B cell (primary cell): ENCODE measurements at regions of chr22 and their contacts with region 1.

Region 1: DNA sequence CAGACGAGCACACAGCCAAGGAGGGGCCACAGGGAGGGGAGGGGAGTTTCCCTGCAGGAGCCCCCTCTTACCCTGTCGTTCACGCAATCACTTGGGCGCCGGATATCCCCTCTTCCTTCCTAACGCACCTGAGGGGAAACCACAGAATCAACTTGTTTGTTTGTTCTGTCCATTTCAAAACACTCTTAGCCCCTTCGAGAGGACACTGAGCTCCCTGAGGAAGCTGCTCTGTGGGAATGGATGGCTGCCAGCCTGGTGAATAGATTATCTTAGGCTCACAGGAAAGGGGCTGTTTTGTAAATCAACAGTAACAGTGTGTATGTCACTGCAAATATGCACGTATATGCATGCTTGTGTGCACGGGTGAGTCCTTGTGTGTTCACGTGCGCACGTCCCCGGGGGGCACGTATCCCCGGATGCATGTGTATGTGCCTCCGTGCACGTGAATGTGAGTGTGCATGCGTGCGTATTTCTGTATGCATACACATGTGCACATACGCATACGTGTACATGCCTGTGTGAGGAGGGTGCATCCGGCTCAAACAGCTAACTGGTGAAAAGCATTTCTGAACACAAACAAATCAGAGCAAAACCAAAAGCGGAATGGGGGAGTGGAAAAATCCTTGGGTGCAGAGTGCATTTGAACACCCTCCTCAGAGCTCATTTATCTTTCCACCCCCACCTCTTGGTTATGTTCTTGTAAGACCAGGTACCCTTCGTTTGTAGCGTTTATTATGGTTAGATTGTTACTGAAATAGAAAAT is 7.2 kb downstream of the ARSA start:
- DNase-seq: peak; percentile 94
- ATAC-seq: peak; percentile 81
- H3K4me3 ChIP-seq: peak overlapping the region; percentile 46 to 79 (median 59)
- H3K4me3 Mint-ChIP-seq: peak overlapping the region; percentile 95
- H3K27ac ChIP-seq: peak overlapping the region; percentile 91 to 95
- H3K27ac Mint-ChIP-seq: peak overlapping the region; percentile 97
- H3K4me1 ChIP-seq: peaks cover 24 to 35% of the 10 kb centered on the region in 2 donors
- H3K4me1 Mint-ChIP-seq: peaks cover 31% of the 10 kb centered on the region
- H3K27me3 ChIP-seq: no peaks in the 10 kb centered on the region
- H3K27me3 Mint-ChIP-seq: no peaks in the 10 kb centered on the region
- CTCF ChIP-seq: peak; percentile 24

Region 2: DNA sequence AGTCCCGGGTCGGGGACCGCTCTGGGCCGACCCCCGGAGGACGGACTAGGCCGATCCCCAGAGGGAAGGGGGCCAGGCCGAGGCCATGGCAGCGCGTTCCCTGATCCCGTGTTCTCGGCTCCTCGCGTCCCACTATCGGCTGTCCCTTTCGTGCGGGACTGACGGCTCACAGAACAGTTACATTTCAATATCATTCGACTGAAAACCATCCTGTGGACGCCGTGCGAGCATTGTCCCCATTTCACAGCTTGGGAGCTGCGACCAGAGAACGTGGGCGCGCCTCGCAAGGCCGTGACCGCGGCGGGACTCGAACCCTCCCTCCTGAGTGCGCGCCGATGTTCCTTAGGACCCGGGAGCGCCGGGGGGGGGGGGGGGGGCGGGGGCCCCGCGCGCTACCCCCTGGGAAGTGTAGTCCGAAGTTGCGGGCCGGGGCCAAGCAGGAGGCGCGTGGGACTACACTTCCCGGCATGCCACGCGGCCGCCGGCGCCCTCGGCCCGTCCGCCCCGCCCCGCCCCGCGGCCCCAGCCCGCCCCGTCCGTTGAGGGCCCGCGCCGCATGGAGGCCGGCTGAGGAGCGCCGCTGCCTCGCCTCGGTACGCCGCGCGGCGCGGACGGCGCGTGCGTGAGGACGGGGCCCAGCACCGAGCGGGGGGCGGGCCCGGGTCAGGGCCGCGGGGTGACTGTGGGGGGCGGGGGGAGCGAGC is 435.2 kb before region 1 on chr22 and contains the start of gene TRABD:
- CTCF ChIA-PET with region 1: no interaction called
- POLR2A ChIA-PET with region 1: no interaction called
- intact Hi-C with region 1: loop called (anchors 2 kb)
- DNase-seq: peak; percentile 92
- ATAC-seq: peak; percentile 60
- H3K4me3 ChIP-seq: peak within 1 kb of the TSS; percentile 52 to 76 (median 61)
- H3K4me3 Mint-ChIP-seq: peak within 1 kb of the TSS; percentile 90
- H3K27ac ChIP-seq: peak within 1 kb of the TSS; percentile 38 to 71
- H3K27ac Mint-ChIP-seq: peak within 1 kb of the TSS; percentile 86
- H3K4me1 ChIP-seq: peaks cover 50 to 54% of the 10 kb centered on the region in 2 donors
- H3K4me1 Mint-ChIP-seq: peaks cover 36% of the 10 kb centered on the region
- H3K27me3 ChIP-seq: peaks cover 0 to 17% (median 2%) of the 10 kb centered on the region in 4 experiments
- H3K27me3 Mint-ChIP-seq: no peaks in the 10 kb centered on the region
- CTCF ChIP-seq: no peak
- total RNA-seq, gene TRABD: 200 and 205 TPM in 2 replicates

Region 3: DNA sequence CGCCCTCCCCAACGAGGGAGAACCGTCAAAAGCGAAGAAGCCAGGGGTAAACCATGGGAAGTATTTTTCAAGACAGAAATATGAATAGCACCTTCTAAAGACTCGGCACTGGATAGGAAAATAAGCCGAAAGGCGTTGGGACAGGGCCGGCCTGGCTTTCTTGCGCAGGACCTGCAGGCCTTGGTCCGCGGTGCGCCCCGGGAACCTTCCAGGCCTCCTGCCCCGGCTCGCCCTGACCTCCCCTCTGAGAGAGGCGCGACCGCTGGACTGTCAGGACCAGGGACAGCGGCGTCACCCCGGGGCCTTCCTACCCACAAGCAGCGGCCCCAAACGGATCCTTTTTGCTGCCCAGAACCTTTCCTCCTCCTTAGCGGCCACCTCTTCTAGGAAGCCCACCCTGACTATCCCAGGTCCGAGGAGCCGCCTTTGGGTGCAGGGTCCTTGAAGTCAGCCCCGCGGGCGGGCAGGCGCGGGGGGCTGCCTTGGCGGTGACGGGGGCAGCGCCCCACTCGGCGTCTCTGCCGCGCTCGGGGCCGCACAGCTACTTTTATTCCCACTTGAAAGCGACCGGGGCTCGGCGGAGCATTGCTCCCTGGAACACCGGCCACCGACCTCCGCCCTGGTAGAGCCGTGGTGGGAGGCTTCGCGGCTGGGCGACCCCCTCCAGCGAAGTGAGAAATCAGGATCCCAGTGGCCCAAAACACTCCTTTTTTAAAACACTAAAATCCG is 349.9 kb before region 1 on chr22:
- CTCF ChIA-PET with region 1: interaction called, 16 read pairs
- POLR2A ChIA-PET with region 1: no interaction called
- intact Hi-C with region 1: loop called (anchors 1 kb)
- DNase-seq: peak; percentile 82
- ATAC-seq: peak; percentile 58
- H3K4me3 ChIP-seq: peak overlapping the region in 4 of 5 experiments; percentile 43 to 79 (median 62)
- H3K4me3 Mint-ChIP-seq: peak overlapping the region; percentile 80
- H3K27ac ChIP-seq: no peak overlapping the region
- H3K27ac Mint-ChIP-seq: peak overlapping the region; percentile 10
- H3K4me1 ChIP-seq: peaks cover 23 to 34% of the 10 kb centered on the region in 2 donors
- H3K4me1 Mint-ChIP-seq: peaks cover 19% of the 10 kb centered on the region
- H3K27me3 ChIP-seq: peaks cover 0 to 23% (median 9%) of the 10 kb centered on the region in 4 experiments
- H3K27me3 Mint-ChIP-seq: no peaks in the 10 kb centered on the region
- CTCF ChIP-seq: no peak

Region 4: DNA sequence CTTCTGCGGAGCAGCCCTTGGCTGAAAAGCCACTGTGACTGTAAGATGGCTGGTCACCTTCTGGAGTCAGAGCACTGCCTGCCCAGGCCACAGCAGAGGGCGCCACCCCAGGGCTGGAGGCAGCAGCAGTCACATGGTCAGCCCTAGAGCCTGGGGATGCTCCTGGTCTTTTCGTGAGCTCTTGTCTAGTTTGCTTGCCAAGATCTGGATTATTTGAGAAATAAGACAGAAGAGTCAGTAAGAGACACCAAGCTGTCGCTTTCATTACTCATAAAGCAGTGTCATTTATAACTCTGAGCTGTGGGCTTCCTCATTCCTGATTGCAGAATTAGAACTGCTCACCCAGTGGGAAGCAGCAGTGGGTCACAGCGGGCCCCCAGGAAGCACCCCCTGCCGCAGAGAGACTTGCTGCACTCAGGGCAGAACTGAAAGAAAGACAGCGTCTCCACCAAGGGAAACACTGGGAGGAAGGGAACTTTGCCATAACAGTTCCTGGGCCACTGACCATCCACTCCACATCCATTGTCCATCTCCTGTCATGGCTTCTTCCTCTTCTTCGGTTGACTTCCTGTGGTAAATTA is 220.9 kb before region 1 on chr22:
- CTCF ChIA-PET with region 1: interaction called, 14 read pairs
- POLR2A ChIA-PET with region 1: no interaction called
- intact Hi-C with region 1: loop called (anchors 5 kb)
- DNase-seq: peak; percentile 44
- ATAC-seq: peak; percentile 65
- H3K4me3 ChIP-seq: no peak overlapping the region
- H3K4me3 Mint-ChIP-seq: peak overlapping the region; percentile 66
- H3K27ac ChIP-seq: peak overlapping the region; percentile 45 to 47
- H3K27ac Mint-ChIP-seq: peak overlapping the region; percentile 88
- H3K4me1 ChIP-seq: peaks cover 30 to 44% of the 10 kb centered on the region in 2 donors
- H3K4me1 Mint-ChIP-seq: peaks cover 44% of the 10 kb centered on the region
- H3K27me3 ChIP-seq: no peaks in the 10 kb centered on the region
- H3K27me3 Mint-ChIP-seq: no peaks in the 10 kb centered on the region
- CTCF ChIP-seq: no peak

Region 5: DNA sequence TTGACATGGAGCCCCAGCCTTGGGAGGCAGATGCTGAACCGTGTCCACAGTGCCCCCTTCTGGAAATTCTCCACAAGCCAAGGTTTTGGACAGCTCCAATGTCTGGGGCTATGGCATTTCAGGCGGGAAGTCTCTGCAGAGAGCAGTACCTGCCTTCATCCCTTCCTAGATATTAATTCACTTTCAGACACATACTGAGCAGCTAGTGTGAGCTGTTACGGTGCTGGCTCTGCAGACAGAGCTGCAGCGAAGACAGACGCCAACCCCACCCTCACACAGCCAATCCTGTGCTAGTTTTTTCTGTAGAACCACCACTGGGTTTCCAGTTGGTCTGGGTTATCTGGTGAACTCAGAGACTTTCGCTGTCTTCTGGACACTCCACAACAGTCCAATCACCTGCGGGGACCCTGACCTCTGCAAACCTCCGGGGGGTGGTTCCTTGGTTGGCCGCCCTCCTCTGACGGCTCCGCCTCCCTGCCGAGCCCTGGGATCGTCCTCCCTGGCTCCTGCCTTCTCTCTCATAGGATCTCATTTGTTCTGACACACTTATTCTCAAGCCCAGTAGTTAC is 122.4 kb before region 1 on chr22:
- CTCF ChIA-PET with region 1: interaction called, 30 read pairs
- POLR2A ChIA-PET with region 1: no interaction called
- intact Hi-C with region 1: no loop called
- DNase-seq: peak; percentile 80
- ATAC-seq: peak; percentile 94
- H3K4me3 ChIP-seq: no peak overlapping the region
- H3K4me3 Mint-ChIP-seq: no peak overlapping the region
- H3K27ac ChIP-seq: no peak overlapping the region
- H3K27ac Mint-ChIP-seq: no peak overlapping the region
- H3K4me1 ChIP-seq: peaks cover 3 to 10% of the 10 kb centered on the region in 2 donors
- H3K4me1 Mint-ChIP-seq: peaks cover 4% of the 10 kb centered on the region
- H3K27me3 ChIP-seq: no peaks in the 10 kb centered on the region
- H3K27me3 Mint-ChIP-seq: no peaks in the 10 kb centered on the region
- CTCF ChIP-seq: peak; percentile 73

Region 6: DNA sequence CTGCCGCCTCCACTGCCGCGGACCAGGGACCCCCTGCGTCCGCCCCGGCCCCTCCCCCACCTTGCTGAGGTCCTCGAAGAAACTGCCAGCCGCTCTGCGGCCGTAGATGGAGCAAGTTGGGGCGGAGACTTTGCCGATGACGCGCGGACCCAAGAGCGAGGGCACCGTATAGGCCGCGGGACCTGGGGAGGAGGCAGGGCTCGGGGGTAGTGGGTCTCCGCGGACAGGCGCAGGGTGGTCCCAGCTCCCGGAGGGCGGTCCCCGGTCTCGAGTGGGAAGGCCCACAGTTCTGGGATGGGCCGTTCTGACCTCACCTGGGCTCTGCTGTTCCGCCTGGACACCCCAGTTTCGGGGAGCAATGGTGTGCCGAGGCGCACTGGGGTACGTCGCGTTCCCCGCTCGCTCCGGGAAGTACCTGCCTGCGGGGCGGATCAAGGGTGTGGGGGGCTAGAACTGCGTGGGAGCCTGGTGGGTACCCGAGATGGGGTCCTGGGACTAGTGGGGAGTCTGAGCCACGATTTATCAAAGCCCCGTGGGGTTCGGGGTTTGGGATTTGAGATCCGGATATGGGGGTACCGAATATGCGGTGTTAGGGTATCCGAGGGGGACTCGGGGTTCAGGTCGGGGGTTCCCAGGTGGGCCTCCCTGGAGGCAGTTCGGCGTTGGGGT is 89.8 kb before region 1 on chr22:
- CTCF ChIA-PET with region 1: interaction called, 48 read pairs
- POLR2A ChIA-PET with region 1: interaction called, 20 read pairs
- intact Hi-C with region 1: loop called (anchors 1 kb)
- DNase-seq: peak; percentile 95
- ATAC-seq: peak; percentile 44
- H3K4me3 ChIP-seq: peak overlapping the region; percentile 47 to 95 (median 95)
- H3K4me3 Mint-ChIP-seq: peak overlapping the region; percentile 95
- H3K27ac ChIP-seq: peak overlapping the region; percentile 99 to 100
- H3K27ac Mint-ChIP-seq: peak overlapping the region; percentile 99
- H3K4me1 ChIP-seq: peaks cover 22 to 73% of the 10 kb centered on the region in 2 donors
- H3K4me1 Mint-ChIP-seq: peaks cover 54% of the 10 kb centered on the region
- H3K27me3 ChIP-seq: no peaks in the 10 kb centered on the region
- H3K27me3 Mint-ChIP-seq: no peaks in the 10 kb centered on the region
- CTCF ChIP-seq: no peak

Region 7: DNA sequence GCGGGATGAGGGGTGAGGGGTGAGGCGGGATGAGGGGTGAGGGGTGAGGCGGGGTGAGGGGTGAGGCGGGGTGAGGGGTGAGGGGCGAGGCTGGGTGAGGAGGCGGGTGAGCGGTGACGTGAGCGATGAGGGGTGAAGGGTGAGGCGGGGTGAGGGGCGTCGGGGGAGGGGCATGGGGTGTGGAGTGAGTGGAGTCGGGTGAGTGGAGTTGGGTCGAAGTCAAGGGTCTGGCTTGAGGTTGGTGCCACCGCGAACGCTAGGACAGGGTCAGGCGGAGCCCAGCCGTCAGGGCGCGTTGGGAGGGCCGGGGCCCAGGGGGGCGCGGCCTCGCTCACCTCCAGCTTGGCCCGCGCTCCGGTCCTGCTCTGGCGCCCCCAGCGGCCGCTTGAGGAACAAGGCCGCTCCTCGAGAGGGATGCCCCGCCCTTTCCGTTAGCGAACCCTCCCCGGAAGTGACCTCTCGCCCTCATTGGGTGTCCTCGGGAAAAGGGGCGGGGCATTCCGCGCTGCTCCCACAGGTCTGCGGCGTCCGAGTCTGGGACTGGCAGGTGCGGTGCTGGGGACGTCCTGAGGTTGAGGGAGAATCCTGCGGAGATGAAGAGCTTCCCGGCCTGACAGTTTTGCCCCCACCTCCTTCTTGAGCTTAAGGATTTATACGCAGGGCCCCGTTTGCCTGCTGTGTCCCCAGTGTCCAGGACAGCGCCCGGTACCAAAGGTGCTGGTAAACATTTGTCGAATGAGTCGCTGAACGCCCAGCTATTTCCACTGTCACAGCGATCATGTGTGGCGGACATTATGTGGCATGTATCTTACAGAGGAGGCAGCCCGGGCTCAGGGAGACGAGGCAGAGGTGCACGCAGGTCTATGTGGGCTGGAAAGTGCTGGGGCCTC is 58.0 kb before region 1 on chr22 and contains the start of gene SYCE3:
- CTCF ChIA-PET with region 1: interaction called, 7 read pairs
- POLR2A ChIA-PET with region 1: interaction called, 5 read pairs
- intact Hi-C with region 1: loop called (anchors 1 kb)
- DNase-seq: peak; percentile 97
- ATAC-seq: peak; percentile 96
- H3K4me3 ChIP-seq: peak within 1 kb of the TSS; percentile 5 to 83 (median 72)
- H3K4me3 Mint-ChIP-seq: peak within 1 kb of the TSS; percentile 87
- H3K27ac ChIP-seq: peak within 1 kb of the TSS in 1 of 2 donors; percentile 37
- H3K27ac Mint-ChIP-seq: peak within 1 kb of the TSS; percentile 87
- H3K4me1 ChIP-seq: peaks cover 5 to 9% of the 10 kb centered on the region in 2 donors
- H3K4me1 Mint-ChIP-seq: peaks cover 16% of the 10 kb centered on the region
- H3K27me3 ChIP-seq: no peaks in the 10 kb centered on the region
- H3K27me3 Mint-ChIP-seq: no peaks in the 10 kb centered on the region
- CTCF ChIP-seq: peak; percentile 89
- total RNA-seq, gene SYCE3: not detected in 2 replicates

Region 8: GRCh38 chr22:50606165-50606945 is 14.4 kb before region 1 on chr22:
- CTCF ChIA-PET with region 1: no interaction called
- POLR2A ChIA-PET with region 1: no interaction called
- intact Hi-C with region 1: no loop called
- DNase-seq: no peak
- ATAC-seq: no peak
- H3K4me3 ChIP-seq: no peak overlapping the region
- H3K4me3 Mint-ChIP-seq: no peak overlapping the region
- H3K27ac ChIP-seq: no peak overlapping the region
- H3K27ac Mint-ChIP-seq: no peak overlapping the region
- H3K4me1 ChIP-seq: peaks cover 0 to 4% of the 10 kb centered on the region in 2 donors
- H3K4me1 Mint-ChIP-seq: peaks cover 8% of the 10 kb centered on the region
- H3K27me3 ChIP-seq: peaks cover 0 to 58% (median 18%) of the 10 kb centered on the region in 4 experiments
- H3K27me3 Mint-ChIP-seq: peaks cover 48% of the 10 kb centered on the region
- CTCF ChIP-seq: no peak

Region 9: DNA sequence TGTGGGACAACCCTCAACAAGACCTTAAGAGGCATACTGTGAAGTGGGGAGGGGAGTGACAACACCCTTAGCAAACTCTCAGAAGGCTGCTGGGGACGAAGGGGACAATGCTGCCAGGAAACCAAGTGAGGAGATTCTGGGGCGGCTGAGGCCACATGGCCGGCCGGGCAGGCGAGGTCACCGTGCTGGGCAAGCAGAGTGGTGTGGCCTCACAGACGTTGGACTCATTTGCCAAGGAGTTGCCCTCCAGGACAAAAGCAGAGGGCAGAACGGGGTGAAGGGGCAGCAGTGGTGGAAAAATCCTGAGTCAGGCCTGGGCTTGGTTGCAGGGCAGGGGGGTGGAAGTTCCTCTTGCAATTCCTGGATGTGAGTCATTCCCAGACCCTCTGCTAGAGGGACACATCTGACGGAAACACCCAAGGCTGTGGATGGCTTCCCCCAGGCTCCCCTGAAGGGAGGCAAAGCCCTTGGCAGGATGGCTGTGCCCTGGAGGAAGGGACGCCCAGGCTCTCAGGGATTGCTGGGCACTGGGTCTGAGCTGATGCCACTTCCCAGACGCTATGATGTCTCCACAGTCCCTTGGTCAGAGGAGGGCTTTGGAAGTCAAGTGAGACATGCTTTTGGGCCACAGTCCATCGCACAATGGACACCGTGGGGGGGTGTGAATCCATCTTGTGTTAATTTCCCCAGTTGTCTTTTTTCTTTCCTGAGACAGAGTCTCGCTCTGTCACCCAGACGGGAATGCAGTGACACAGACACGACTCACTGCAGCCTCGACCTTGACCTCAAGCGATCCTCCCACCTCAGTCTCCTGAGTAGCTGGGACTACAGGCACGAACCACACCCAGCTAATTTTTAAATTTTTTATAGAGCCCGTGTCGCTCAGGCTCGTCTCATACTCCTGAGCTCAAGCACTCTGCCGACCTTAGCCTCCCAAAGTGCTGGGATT is 35.6 kb after region 1 on chr22:
- CTCF ChIA-PET with region 1: no interaction called
- POLR2A ChIA-PET with region 1: no interaction called
- intact Hi-C with region 1: no loop called
- DNase-seq: no peak
- ATAC-seq: no peak
- H3K4me3 ChIP-seq: no peak overlapping the region
- H3K4me3 Mint-ChIP-seq: no peak overlapping the region
- H3K27ac ChIP-seq: no peak overlapping the region
- H3K27ac Mint-ChIP-seq: no peak overlapping the region
- H3K4me1 ChIP-seq: no peaks in the 10 kb centered on the region
- H3K4me1 Mint-ChIP-seq: no peaks in the 10 kb centered on the region
- H3K27me3 ChIP-seq: peaks cover 0 to 10% (median 0%) of the 10 kb centered on the region in 4 experiments
- H3K27me3 Mint-ChIP-seq: peaks cover 27% of the 10 kb centered on the region
- CTCF ChIP-seq: no peak